ENCODE measurements at regions of chr1 and their contacts with region 1.

Region 1: GRCh38 chr1:100351095-100351891 is 1.0 kb upstream of the CDC14A start:
- DNase-seq: peak; percentile 67 to 94 (median 85)
- ATAC-seq: peak; percentile 70
- H3K4me3 ChIP-seq: peak overlapping the region; percentile 76 to 88
- H3K4me3 Mint-ChIP-seq: peak overlapping the region; percentile 99
- H3K27ac ChIP-seq: peak overlapping the region; percentile 80 to 86
- H3K27ac Mint-ChIP-seq: peak overlapping the region; percentile 99
- H3K4me1 ChIP-seq: peaks cover 25% of the 10 kb centered on the region
- H3K4me1 Mint-ChIP-seq: peaks cover 36% of the 10 kb centered on the region
- H3K27me3 ChIP-seq: no peaks in the 10 kb centered on the region
- H3K27me3 Mint-ChIP-seq: no peaks in the 10 kb centered on the region
- CTCF ChIP-seq: no peak

Region 2: GRCh38 chr1:99849744-99850458 is 501.4 kb before region 1 on chr1 and contains the start of gene AGL:
- CTCF ChIA-PET with region 1: no interaction called
- POLR2A ChIA-PET with region 1: no interaction called
- intact Hi-C with region 1: loop called in 1 of 2 experiments (anchors 5 kb)
- DNase-seq: peak; percentile 75 to 92 (median 86)
- ATAC-seq: peak; percentile 95
- H3K4me3 ChIP-seq: peak within 1 kb of the TSS; percentile 80 to 96
- H3K4me3 Mint-ChIP-seq: peak within 1 kb of the TSS; percentile 95
- H3K27ac ChIP-seq: peak within 1 kb of the TSS; percentile 70 to 74
- H3K27ac Mint-ChIP-seq: peak within 1 kb of the TSS; percentile 94
- H3K4me1 ChIP-seq: peaks cover 14% of the 10 kb centered on the region
- H3K4me1 Mint-ChIP-seq: peaks cover 42% of the 10 kb centered on the region
- H3K27me3 ChIP-seq: no peaks in the 10 kb centered on the region
- H3K27me3 Mint-ChIP-seq: no peaks in the 10 kb centered on the region
- CTCF ChIP-seq: no peak
- total RNA-seq, gene AGL: 7.6 to 8.4 TPM

Region 3: DNA sequence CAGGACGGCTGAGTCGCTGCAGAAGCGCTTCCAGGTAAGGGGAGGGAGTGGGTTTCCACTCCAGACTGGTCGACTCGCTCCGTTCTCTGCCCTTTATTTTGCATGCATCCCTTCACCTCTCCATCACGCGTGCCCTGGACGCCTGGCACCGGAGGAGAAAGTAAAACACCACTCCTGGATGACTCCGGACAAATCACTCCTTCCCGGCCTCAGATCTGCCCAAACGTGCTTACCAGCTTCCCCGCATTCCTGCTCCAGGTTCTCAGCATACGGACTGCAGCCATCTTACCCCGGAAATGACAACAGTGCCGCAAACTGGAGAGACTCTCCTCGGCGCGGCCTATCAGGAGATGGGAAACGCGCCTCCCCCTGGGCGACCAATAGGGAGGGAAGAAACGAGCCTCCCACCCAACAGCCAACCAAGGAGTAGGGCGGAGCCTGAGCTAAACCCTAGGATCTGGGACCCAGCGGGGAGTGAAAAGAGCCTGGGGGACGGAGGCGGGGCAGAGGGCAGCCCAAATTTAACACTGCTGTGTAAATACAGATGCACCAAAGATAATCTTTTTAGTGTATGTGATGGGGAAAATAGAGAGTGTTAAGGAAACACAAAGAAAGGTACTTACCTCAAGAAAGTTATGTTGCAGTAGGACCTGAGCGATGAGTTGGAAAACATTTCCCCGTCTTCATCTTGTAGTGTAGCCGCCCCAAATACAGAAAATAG is 101.6 kb before region 1 on chr1 and contains the start of gene DBT:
- CTCF ChIA-PET with region 1: no interaction called
- POLR2A ChIA-PET with region 1: interaction called, 14 read pairs
- intact Hi-C with region 1: loop called (anchors 1 to 5 kb)
- DNase-seq: peak; percentile 77 to 96 (median 92)
- ATAC-seq: peak; percentile 100
- H3K4me3 ChIP-seq: peak within 1 kb of the TSS; percentile 68 to 92
- H3K4me3 Mint-ChIP-seq: no peak within 1 kb of the TSS
- H3K27ac ChIP-seq: peak within 1 kb of the TSS; percentile 71 to 87
- H3K27ac Mint-ChIP-seq: no peak within 1 kb of the TSS
- H3K4me1 ChIP-seq: peaks cover 20% of the 10 kb centered on the region
- H3K4me1 Mint-ChIP-seq: peaks cover 18% of the 10 kb centered on the region
- H3K27me3 ChIP-seq: no peaks in the 10 kb centered on the region
- H3K27me3 Mint-ChIP-seq: no peaks in the 10 kb centered on the region
- CTCF ChIP-seq: no peak
- total RNA-seq, gene DBT: 4.6 to 4.9 TPM

Region 4: DNA sequence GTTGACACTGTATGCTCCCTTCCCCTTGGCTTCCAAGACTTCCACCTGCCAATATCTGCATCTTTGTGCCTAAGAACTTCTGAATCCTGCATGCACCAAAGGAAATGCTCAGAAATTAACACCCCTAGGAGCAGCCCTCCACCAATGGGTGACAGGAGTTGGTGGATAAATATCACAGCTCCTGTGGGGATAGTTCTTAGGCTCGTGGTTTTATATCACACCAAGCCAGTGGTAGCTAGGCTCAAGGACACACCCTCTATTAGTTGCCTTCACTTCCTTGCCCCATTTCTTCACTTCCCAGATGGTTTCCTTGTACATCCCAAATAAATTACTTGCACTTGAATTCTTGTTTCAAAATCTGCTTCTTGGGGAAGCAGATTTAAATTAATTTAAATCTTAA is 15.9 kb before region 1 on chr1:
- CTCF ChIA-PET with region 1: no interaction called
- POLR2A ChIA-PET with region 1: no interaction called
- intact Hi-C with region 1: no loop called
- DNase-seq: no peak
- ATAC-seq: no peak
- H3K4me3 ChIP-seq: no peak overlapping the region
- H3K4me3 Mint-ChIP-seq: no peak overlapping the region
- H3K27ac ChIP-seq: no peak overlapping the region
- H3K27ac Mint-ChIP-seq: no peak overlapping the region
- H3K4me1 ChIP-seq: no peaks in the 10 kb centered on the region
- H3K4me1 Mint-ChIP-seq: no peaks in the 10 kb centered on the region
- H3K27me3 ChIP-seq: no peaks in the 10 kb centered on the region
- H3K27me3 Mint-ChIP-seq: peaks cover 3% of the 10 kb centered on the region
- CTCF ChIP-seq: no peak

Region 5: GRCh38 chr1:100364697-100365096 is 13.4 kb after region 1 on chr1:
- CTCF ChIA-PET with region 1: interaction called, 8 read pairs
- POLR2A ChIA-PET with region 1: interaction called, 9 read pairs
- intact Hi-C with region 1: loop called in 1 of 2 experiments (anchors 1 kb)
- DNase-seq: no peak
- ATAC-seq: no peak
- H3K4me3 ChIP-seq: no peak overlapping the region
- H3K4me3 Mint-ChIP-seq: peak overlapping the region; percentile 54
- H3K27ac ChIP-seq: no peak overlapping the region
- H3K27ac Mint-ChIP-seq: peak overlapping the region; percentile 78
- H3K4me1 ChIP-seq: peaks cover 41% of the 10 kb centered on the region
- H3K4me1 Mint-ChIP-seq: peaks cover 84% of the 10 kb centered on the region
- H3K27me3 ChIP-seq: no peaks in the 10 kb centered on the region
- H3K27me3 Mint-ChIP-seq: no peaks in the 10 kb centered on the region
- CTCF ChIP-seq: no peak

Region 6: DNA sequence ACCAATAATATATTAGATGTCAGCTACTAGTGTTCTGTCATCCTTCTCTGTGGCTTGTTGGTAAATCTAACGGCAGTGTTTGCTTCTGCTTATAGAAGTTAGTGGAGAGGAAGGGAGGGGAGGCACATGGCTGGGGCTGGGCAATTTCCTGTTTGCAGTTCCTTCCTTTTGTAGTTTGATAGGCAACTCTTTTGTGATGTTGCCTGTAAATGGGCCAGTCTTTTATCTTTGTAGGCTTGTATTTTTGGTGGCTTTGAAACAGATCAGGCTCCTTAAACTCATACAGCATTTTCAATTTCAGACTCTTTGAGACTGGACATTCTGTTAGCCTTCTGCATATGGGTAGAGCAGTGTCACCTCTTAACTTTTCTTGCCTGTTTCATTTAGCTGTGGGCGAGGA is 49.1 kb after region 1 on chr1:
- CTCF ChIA-PET with region 1: interaction called, 11 read pairs
- POLR2A ChIA-PET with region 1: interaction called, 16 read pairs
- intact Hi-C with region 1: loop called (anchors 2 kb)
- DNase-seq: peak; percentile 39 to 90 (median 66)
- ATAC-seq: peak; percentile 82
- H3K4me3 ChIP-seq: peak overlapping the region; percentile 13 to 19
- H3K4me3 Mint-ChIP-seq: peak overlapping the region; percentile 73
- H3K27ac ChIP-seq: peak overlapping the region; percentile 59 to 80
- H3K27ac Mint-ChIP-seq: peak overlapping the region; percentile 92
- H3K4me1 ChIP-seq: peaks cover 93% of the 10 kb centered on the region
- H3K4me1 Mint-ChIP-seq: peaks cover 86% of the 10 kb centered on the region
- H3K27me3 ChIP-seq: no peaks in the 10 kb centered on the region
- H3K27me3 Mint-ChIP-seq: no peaks in the 10 kb centered on the region
- CTCF ChIP-seq: no peak

Region 7: DNA sequence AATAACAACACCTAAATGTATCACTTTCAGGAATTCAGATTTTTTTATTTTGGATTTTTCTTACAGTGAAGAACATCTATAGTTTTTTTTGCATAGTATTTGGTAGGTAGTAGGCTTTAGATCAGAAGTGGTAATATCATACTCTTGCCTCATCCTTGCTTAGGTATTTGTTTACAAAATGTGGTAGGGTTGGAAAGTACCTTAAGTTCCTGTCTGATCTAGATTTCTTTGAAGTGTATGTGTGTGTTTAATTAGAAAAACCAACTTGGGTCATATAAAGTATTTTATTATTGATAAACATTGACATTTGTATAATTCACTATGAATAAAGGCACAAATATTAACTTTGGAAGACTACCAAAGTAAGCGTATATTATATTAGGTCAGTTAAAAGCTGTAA is 101.3 kb after region 1 on chr1:
- CTCF ChIA-PET with region 1: interaction called, 82 read pairs
- POLR2A ChIA-PET with region 1: interaction called, 10 read pairs
- intact Hi-C with region 1: loop called in 1 of 2 experiments (anchors 5 kb)
- DNase-seq: peak in 2 of 9 experiments; percentile 75 to 87
- ATAC-seq: peak; percentile 91
- H3K4me3 ChIP-seq: no peak overlapping the region
- H3K4me3 Mint-ChIP-seq: peak overlapping the region; percentile 32
- H3K27ac ChIP-seq: peak overlapping the region; percentile 50 to 73
- H3K27ac Mint-ChIP-seq: peak overlapping the region; percentile 91
- H3K4me1 ChIP-seq: peaks cover 48% of the 10 kb centered on the region
- H3K4me1 Mint-ChIP-seq: peaks cover 85% of the 10 kb centered on the region
- H3K27me3 ChIP-seq: no peaks in the 10 kb centered on the region
- H3K27me3 Mint-ChIP-seq: no peaks in the 10 kb centered on the region
- CTCF ChIP-seq: no peak

Region 8: DNA sequence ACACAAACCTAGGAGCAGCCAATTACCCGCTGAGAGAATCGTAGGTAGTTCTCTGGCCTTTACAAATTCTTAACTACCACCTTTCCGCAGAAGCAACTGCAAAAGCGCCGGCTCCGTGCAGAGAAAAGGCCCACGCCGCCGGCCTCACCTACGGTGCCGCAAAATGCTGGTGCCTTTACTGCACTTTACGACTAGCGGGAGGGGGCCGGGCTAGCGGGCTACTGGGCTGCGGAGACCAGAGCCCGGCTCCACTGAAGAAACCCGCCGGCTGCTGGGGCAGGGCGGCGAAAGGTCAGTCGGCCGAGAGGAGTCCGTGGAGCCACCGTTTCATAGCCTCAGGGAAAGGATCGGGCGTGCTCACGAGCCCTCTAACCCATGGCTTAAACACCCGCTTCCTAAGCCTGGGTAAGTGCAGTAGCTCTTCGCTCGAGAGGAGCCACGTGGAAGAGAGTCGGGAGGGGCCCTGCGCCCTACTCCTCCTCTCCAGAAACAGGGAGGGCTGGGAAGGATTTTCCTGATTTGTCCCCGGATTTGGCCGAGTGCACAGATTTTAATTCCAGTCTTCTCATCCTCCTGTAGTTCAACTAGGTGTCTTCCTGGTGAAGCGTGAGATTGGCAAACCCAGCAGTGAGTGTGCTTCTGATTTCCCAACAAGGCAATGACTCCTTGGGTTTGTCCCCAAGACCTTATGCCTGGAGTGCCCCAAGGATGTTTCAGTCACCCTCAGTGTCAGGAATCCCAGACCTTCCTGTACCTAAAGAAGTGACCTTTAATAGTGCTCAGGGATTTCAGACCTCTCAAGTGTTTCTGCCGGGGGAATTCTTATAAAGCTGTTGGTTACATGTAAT is 674.6 kb after region 1 on chr1 and contains the start of gene DPH5:
- CTCF ChIA-PET with region 1: no interaction called
- POLR2A ChIA-PET with region 1: no interaction called
- intact Hi-C with region 1: loop called in 1 of 2 experiments (anchors 5 kb)
- DNase-seq: peak; percentile 73 to 91 (median 88)
- ATAC-seq: peak; percentile 95
- H3K4me3 ChIP-seq: peak within 1 kb of the TSS; percentile 75 to 96
- H3K4me3 Mint-ChIP-seq: peak within 1 kb of the TSS; percentile 90
- H3K27ac ChIP-seq: peak within 1 kb of the TSS; percentile 71 to 77
- H3K27ac Mint-ChIP-seq: peak within 1 kb of the TSS; percentile 98
- H3K4me1 ChIP-seq: peaks cover 52% of the 10 kb centered on the region
- H3K4me1 Mint-ChIP-seq: peaks cover 83% of the 10 kb centered on the region
- H3K27me3 ChIP-seq: no peaks in the 10 kb centered on the region
- H3K27me3 Mint-ChIP-seq: no peaks in the 10 kb centered on the region
- CTCF ChIP-seq: no peak
- total RNA-seq, gene DPH5: 32.1 to 40.7 TPM

Measured in CD8-positive, alpha-beta T cell (primary cell).